A673 (cell line): ENCODE measurements at regions of chr18 and their contacts with region 1.

Region 1: DNA sequence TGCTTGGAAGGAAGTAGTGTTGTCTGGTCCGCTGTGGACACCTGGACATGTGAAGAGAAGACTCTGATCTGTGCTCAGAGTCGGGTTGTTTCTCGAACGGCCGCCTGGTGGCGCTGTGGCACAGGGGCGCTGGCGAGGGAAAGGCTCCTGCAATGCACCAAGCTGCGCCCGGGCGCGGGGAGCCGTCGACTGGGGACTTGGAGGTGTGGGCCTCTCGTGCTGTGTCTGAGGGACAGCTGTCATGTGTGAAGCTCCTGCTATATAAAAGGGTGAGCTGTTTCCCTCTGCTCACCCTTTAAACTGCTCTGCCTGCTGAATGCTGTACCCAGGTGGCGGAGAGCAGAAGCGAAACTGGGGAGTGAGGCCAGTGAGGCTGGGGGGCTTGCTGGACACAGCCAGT is 44.0 kb downstream of the GNAL start:
- DNase-seq: peak; percentile 78
- H3K4me3 ChIP-seq: no peak overlapping the region
- H3K27ac ChIP-seq: no peak overlapping the region
- H3K4me1 ChIP-seq: no peaks in the 10 kb centered on the region
- H3K27me3 ChIP-seq: peaks cover 78% of the 10 kb centered on the region
- CTCF ChIP-seq: peak; percentile 92

Region 2: GRCh38 chr18:11204020-11204419 is 529.0 kb before region 1 on chr18:
- CTCF ChIA-PET with region 1: no interaction called
- POLR2A ChIA-PET with region 1: no interaction called
- intact Hi-C with region 1: no loop called
- DNase-seq: no peak
- H3K4me3 ChIP-seq: no peak overlapping the region
- H3K27ac ChIP-seq: no peak overlapping the region
- H3K4me1 ChIP-seq: no peaks in the 10 kb centered on the region
- H3K27me3 ChIP-seq: peaks cover 52% of the 10 kb centered on the region
- CTCF ChIP-seq: no peak

Region 3: GRCh38 chr18:11688989-11689668 is 43.9 kb before region 1 on chr18 and contains the start of gene GNAL:
- CTCF ChIA-PET with region 1: no interaction called
- POLR2A ChIA-PET with region 1: no interaction called
- intact Hi-C with region 1: loop called (anchors 5 kb)
- DNase-seq: peak; percentile 80
- H3K4me3 ChIP-seq: peak within 1 kb of the TSS; percentile 42
- H3K27ac ChIP-seq: no peak within 1 kb of the TSS
- H3K4me1 ChIP-seq: peaks cover 9% of the 10 kb centered on the region
- H3K27me3 ChIP-seq: peaks cover 56% of the 10 kb centered on the region
- CTCF ChIP-seq: no peak
- total RNA-seq, gene GNAL: 0.06 and 0.15 TPM in 2 replicates

Region 4: GRCh38 chr18:11937874-11938478 is 204.9 kb after region 1 on chr18:
- CTCF ChIA-PET with region 1: no interaction called
- POLR2A ChIA-PET with region 1: no interaction called
- intact Hi-C with region 1: loop called (anchors 10 kb)
- DNase-seq: peak; percentile 73
- H3K4me3 ChIP-seq: no peak overlapping the region
- H3K27ac ChIP-seq: no peak overlapping the region
- H3K4me1 ChIP-seq: no peaks in the 10 kb centered on the region
- H3K27me3 ChIP-seq: no peaks in the 10 kb centered on the region
- CTCF ChIP-seq: peak; percentile 80

Region 5: GRCh38 chr18:12038639-12039417 is 305.8 kb after region 1 on chr18:
- CTCF ChIA-PET with region 1: interaction called, 6 read pairs
- POLR2A ChIA-PET with region 1: no interaction called
- intact Hi-C with region 1: loop called (anchors 1 kb)
- DNase-seq: peak; percentile 67
- H3K4me3 ChIP-seq: peak overlapping the region; percentile 57
- H3K27ac ChIP-seq: no peak overlapping the region
- H3K4me1 ChIP-seq: no peaks in the 10 kb centered on the region
- H3K27me3 ChIP-seq: no peaks in the 10 kb centered on the region
- CTCF ChIP-seq: peak; percentile 96